Activated naive CD8-positive, alpha-beta T cell treated with anti-CD3 and anti-CD28 coated beads, Interleukin-2, amount 10 ng/mL, durations not matched to agents 7 days and 5 days (primary cell): ENCODE measurements at regions of chr13 and their contacts with region 1.

Region 1: DNA sequence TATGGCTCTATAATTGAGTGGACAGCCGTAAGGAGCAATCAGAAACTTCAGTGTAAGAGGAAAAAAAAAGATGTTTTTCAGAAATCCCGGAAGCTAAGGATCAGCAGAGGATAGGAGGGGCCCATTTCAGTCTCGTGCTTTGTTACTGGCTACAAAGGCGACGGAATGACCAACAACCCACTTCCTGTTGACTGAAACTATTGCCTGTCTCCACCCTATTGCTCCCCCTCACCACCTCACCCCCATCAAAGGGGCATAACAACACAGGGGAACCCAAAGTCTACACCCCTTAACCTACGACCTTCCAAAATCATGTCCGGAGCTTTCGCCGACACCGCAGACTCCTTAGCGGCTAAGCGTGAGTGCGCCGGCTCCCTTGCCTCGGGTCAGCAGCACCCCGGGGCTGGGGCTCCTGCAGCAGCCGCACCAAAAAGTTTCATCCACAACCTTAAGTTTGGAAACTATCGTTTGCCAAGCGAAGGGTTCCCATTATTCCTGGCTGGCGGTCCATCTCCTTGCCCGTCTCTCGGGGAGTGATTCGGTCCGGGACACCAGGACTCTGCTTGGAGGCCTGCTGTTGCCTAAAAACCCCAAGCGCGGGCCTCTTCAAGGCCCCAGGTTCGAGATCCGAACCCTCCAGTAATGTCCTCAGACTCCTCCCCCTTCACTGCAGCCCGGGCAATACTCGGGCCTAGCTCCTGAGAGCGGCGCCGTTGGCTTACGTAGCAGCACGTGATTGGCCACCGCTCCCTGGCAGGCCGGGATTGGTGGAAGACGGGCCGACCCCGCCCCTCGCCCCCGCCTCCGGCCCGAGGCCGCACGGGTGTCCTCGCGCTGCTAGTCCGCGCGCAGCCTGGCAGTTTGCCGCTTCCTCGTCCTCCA is at the start of gene TPP2:
- DNase-seq: peak; percentile 98
- ATAC-seq: peak; percentile 89
- H3K4me3 Mint-ChIP-seq: peak within 1 kb of the TSS; percentile 94
- H3K27ac Mint-ChIP-seq: peak within 1 kb of the TSS; percentile 98
- H3K4me1 Mint-ChIP-seq: peaks cover 57% of the 10 kb centered on the region
- H3K27me3 Mint-ChIP-seq: no peaks in the 10 kb centered on the region
- total RNA-seq, gene TPP2: 78.0 to 87.1 TPM

Region 2: DNA sequence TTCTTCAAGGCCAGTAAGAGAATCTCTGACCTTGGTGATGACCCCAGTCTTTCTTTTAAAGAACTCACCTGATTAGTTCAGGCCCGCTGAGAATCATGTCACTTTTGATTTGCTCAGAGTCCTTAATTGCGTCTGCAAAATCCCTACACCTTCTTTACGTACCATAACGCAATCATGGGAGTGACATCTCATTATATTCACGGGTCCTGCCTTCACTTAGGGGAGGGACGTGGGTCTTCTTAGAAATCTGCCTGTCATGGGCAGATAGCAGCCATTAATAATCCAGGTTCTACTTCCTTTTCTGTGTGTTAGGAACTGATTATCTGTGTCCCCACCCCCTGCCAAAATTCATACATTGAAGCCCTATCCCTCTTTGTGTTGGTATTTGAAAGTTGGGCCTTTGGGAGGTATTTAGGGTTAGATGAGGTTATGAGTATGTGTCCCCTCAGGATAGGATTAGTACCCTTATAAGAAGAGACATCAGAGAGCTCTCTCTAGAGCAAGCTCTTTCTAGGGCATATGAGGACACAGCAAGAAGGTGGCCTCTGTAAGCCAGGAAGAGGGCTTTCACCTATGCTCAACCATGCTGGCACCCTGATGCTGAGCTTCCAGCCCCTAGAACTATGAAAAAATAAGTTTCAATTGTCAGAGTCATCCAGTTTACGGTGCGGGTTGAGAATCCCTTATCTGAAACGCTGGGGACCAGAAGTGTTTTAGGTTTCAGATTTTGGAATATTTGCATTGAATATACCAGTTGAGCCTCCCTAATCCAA is 10.3 kb after region 1 on chr13:
- POLR2A ChIA-PET with region 1: interaction called, 23 read pairs
- DNase-seq: no peak
- ATAC-seq: no peak
- H3K4me3 Mint-ChIP-seq: no peak overlapping the region
- H3K27ac Mint-ChIP-seq: no peak overlapping the region
- H3K4me1 Mint-ChIP-seq: peaks cover 43% of the 10 kb centered on the region
- H3K27me3 Mint-ChIP-seq: no peaks in the 10 kb centered on the region

Region 3: DNA sequence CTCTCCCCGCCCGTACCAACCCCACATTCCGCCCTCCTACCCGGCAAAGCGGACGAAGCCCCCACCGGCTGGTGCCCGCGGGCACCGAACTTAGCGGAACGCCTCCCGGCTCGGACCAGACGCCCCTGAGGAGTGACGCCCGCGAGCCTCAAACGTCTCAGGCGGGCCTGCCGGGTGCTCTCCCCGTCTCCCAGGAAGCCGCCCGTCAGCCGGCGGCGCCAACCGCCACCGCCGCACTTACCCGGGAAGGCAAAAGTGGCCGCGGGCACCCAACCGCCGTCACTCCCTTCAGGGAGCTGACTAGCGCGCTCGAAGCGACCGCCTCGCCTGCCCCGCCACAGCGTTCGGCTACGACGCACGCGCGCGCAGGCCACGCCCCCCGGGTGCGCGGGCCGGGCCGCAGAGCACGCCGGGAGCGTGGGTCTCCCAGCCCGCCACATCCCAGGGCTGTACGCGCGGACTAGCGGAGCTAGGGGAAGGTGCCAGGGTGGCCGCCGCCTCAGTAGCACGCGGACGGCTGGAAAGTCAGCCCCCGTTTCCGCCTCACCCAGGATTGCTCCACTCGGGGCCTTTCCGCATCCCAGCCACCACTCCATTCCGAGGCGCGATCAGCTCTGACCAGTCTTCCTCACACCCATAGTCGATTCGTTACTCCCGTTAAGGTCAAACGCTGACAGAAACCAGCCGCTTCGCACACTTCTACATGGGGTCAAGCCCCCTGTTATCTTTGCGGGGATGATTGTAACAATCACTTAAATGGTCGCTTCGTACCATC is 177.2 kb after region 1 on chr13 and contains the start of gene TEX30:
- POLR2A ChIA-PET with region 1: interaction called, 32 read pairs
- DNase-seq: peak; percentile 96
- ATAC-seq: peak; percentile 94
- H3K4me3 Mint-ChIP-seq: peak within 1 kb of the TSS; percentile 81
- H3K27ac Mint-ChIP-seq: peak within 1 kb of the TSS; percentile 89
- H3K4me1 Mint-ChIP-seq: peaks cover 49% of the 10 kb centered on the region
- H3K27me3 Mint-ChIP-seq: no peaks in the 10 kb centered on the region
- total RNA-seq, gene TEX30: 22.2 to 23.0 TPM

Region 4: GRCh38 chr13:102800145-102801041 is 204.0 kb after region 1 on chr13:
- POLR2A ChIA-PET with region 1: interaction called, 19 read pairs
- DNase-seq: peak; percentile 93
- ATAC-seq: peak; percentile 78
- H3K4me3 Mint-ChIP-seq: peak overlapping the region; percentile 96
- H3K27ac Mint-ChIP-seq: peak overlapping the region; percentile 87
- H3K4me1 Mint-ChIP-seq: peaks cover 43% of the 10 kb centered on the region
- H3K27me3 Mint-ChIP-seq: no peaks in the 10 kb centered on the region

Region 5: DNA sequence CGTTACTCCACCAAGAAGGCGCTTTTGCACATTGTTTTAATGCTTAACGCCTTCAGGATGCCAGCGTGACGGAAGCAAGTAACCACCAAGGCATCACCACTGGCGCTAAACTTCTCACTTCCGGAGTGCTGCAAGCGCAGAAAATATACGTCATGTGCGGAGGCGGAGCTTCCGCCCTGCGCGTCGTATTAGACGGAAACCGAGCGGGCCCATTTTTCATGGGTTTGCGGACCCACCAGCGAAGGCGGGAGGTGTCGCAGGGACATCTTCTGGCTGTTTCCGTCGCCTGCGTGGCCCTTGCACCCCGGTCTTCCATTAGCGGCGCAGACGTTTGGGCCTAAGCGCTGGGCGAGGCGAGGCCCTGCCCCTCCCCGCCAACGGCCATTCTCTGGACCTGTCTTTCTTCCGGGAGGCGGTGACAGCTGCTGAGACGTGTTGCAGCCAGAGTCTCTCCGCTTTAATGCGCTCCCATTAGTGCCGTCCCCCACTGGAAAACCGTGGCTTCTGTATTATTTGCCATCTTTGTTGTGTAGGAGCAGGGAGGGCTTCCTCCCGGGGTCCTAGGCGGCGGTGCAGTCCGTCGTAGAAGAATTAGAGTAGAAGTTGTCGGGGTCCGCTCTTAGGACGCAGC is 249.4 kb after region 1 on chr13 and contains the start of gene ERCC5:
- POLR2A ChIA-PET with region 1: interaction called, 109 read pairs
- DNase-seq: peak; percentile 96
- ATAC-seq: peak; percentile 82
- H3K4me3 Mint-ChIP-seq: peak within 1 kb of the TSS; percentile 96
- H3K27ac Mint-ChIP-seq: peak within 1 kb of the TSS; percentile 98
- H3K4me1 Mint-ChIP-seq: peaks cover 27% of the 10 kb centered on the region
- H3K27me3 Mint-ChIP-seq: no peaks in the 10 kb centered on the region
- total RNA-seq, gene ERCC5: 102 to 111 TPM